ENCODE measurements at regions of chr16 and their contacts with region 1.

Region 1: GRCh38 chr16:740764-741505 is at the start of gene CIAO3:
- DNase-seq: peak; percentile 26
- H3K4me3 ChIP-seq: peak within 1 kb of the TSS; percentile 73
- CTCF ChIP-seq: peak; percentile 91

Region 2: GRCh38 chr16:720990-721764 is 19.8 kb before region 1 on chr16 and contains the start of gene ANTKMT:
- CTCF ChIA-PET with region 1: interaction called, 16 read pairs
- POLR2A ChIA-PET with region 1: no interaction called
- DNase-seq: no peak
- H3K4me3 ChIP-seq: peak within 1 kb of the TSS; percentile 75
- CTCF ChIP-seq: no peak

Region 3: GRCh38 chr16:728131-728889 is 12.6 kb before region 1 on chr16:
- CTCF ChIA-PET with region 1: interaction called, 48 read pairs
- POLR2A ChIA-PET with region 1: no interaction called
- DNase-seq: no peak
- H3K4me3 ChIP-seq: peak overlapping the region; percentile 71
- CTCF ChIP-seq: no peak

Region 4: GRCh38 chr16:754656-755055 is 13.7 kb after region 1 on chr16:
- CTCF ChIA-PET with region 1: interaction called, 40 read pairs
- POLR2A ChIA-PET with region 1: no interaction called
- DNase-seq: no peak
- H3K4me3 ChIP-seq: no peak overlapping the region
- CTCF ChIP-seq: no peak

Region 5: GRCh38 chr16:877991-878784 is 137.3 kb after region 1 on chr16:
- CTCF ChIA-PET with region 1: no interaction called
- POLR2A ChIA-PET with region 1: no interaction called
- DNase-seq: no peak
- H3K4me3 ChIP-seq: no peak overlapping the region
- CTCF ChIP-seq: peak; percentile 7